Breast epithelium (tissue), 4 donors: ENCODE measurements at regions of chr17 and their contacts with region 1.

Region 1: GRCh38 chr17:30482555-30482954 is 5.3 kb downstream of the GOSR1 start:
- DNase-seq: no peak
- H3K4me3 ChIP-seq: no peak overlapping the region
- H3K27ac ChIP-seq: no peak overlapping the region
- H3K4me1 ChIP-seq: no peaks in the 10 kb centered on the region
- H3K27me3 ChIP-seq: no peaks in the 10 kb centered on the region
- CTCF ChIP-seq: no peak
- POLR2A ChIP-seq: no peak

Region 2: DNA sequence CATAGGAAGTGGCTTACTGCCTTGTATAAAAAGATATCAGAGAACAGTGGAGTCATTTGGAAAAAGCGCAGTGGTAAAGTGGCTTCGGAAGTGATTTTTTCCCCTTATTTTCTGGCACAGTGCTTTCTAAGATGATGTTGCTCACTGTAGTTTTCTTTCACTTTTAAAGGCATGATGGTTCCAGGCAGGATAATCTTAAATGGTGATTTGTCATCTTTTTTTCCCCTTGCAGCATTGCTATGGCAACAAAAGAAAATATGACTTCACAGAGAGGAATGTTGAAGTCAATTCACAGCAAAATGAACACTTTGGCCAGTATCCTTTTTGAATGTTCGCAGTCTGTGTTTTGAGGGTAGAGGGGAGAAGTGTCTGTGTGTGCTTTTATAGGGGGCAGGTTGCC is 37.2 kb after region 1 on chr17:
- intact Hi-C with region 1: loop called (anchors 2 kb)
- DNase-seq: no peak
- H3K4me3 ChIP-seq: no peak overlapping the region
- H3K27ac ChIP-seq: peak overlapping the region in 1 of 2 donors; percentile 50
- H3K4me1 ChIP-seq: peaks cover 0 to 5% of the 10 kb centered on the region in 2 donors
- H3K27me3 ChIP-seq: no peaks in the 10 kb centered on the region
- CTCF ChIP-seq: no peak
- POLR2A ChIP-seq: no peak